ENCODE measurements at regions of chr19 and their contacts with region 1.

Region 1: GRCh38 chr19:29761575-29762232 is 46.6 kb upstream of the C19orf12 start:
- DNase-seq: no peak
- ATAC-seq: no peak
- H3K4me3 Mint-ChIP-seq: no peak overlapping the region
- H3K27ac Mint-ChIP-seq: no peak overlapping the region
- H3K4me1 Mint-ChIP-seq: peaks cover 4% of the 10 kb centered on the region; the same call in 1 of the 2 replicates
- H3K27me3 Mint-ChIP-seq: no peaks in the 10 kb centered on the region
- CTCF ChIP-seq: no peak

Region 2: GRCh38 chr19:29724102-29724641 is 37.5 kb before region 1 on chr19:
- CTCF ChIA-PET with region 1: interaction called, 12 read pairs
- POLR2A ChIA-PET with region 1: no interaction called
- DNase-seq: peak; percentile 62
- ATAC-seq: peak; percentile 80
- H3K4me3 Mint-ChIP-seq: peak overlapping the region; percentile 60
- H3K27ac Mint-ChIP-seq: no peak overlapping the region
- H3K4me1 Mint-ChIP-seq: peaks cover 15% of the 10 kb centered on the region
- H3K27me3 Mint-ChIP-seq: peaks cover 24% of the 10 kb centered on the region
- CTCF ChIP-seq: no peak

Region 3: GRCh38 chr19:29745253-29745652 is 16.5 kb before region 1 on chr19:
- CTCF ChIA-PET with region 1: interaction called, 25 read pairs
- POLR2A ChIA-PET with region 1: no interaction called
- DNase-seq: peak; percentile 69
- ATAC-seq: peak; percentile 98
- H3K4me3 Mint-ChIP-seq: no peak overlapping the region
- H3K27ac Mint-ChIP-seq: no peak overlapping the region
- H3K4me1 Mint-ChIP-seq: no peaks in the 10 kb centered on the region
- H3K27me3 Mint-ChIP-seq: no peaks in the 10 kb centered on the region; the same call in 1 of the 2 replicates
- CTCF ChIP-seq: no peak

Region 4: GRCh38 chr19:29779921-29780320 is 18.2 kb after region 1 on chr19:
- CTCF ChIA-PET with region 1: interaction called, 18 read pairs
- POLR2A ChIA-PET with region 1: no interaction called
- DNase-seq: peak; percentile 51
- ATAC-seq: peak; percentile 88
- H3K4me3 Mint-ChIP-seq: no peak overlapping the region
- H3K27ac Mint-ChIP-seq: peak overlapping the region; percentile 41; the same call in 1 of the 2 replicates
- H3K4me1 Mint-ChIP-seq: peaks cover 11% of the 10 kb centered on the region
- H3K27me3 Mint-ChIP-seq: no peaks in the 10 kb centered on the region; the same call in 1 of the 2 replicates
- CTCF ChIP-seq: no peak

Region 5: GRCh38 chr19:29844891-29845572 is 83.3 kb after region 1 on chr19:
- CTCF ChIA-PET with region 1: interaction called, 10 read pairs
- POLR2A ChIA-PET with region 1: no interaction called
- DNase-seq: peak; percentile 93
- ATAC-seq: peak; percentile 83
- H3K4me3 Mint-ChIP-seq: peak overlapping the region; percentile 94
- H3K27ac Mint-ChIP-seq: peak overlapping the region; percentile 93
- H3K4me1 Mint-ChIP-seq: peaks cover 23% of the 10 kb centered on the region
- H3K27me3 Mint-ChIP-seq: peaks cover 16% of the 10 kb centered on the region
- CTCF ChIP-seq: no peak

Region 6: GRCh38 chr19:29873024-29873800 is 111.5 kb after region 1 on chr19:
- CTCF ChIA-PET with region 1: interaction called, 20 read pairs
- POLR2A ChIA-PET with region 1: no interaction called
- DNase-seq: peak; percentile 85
- ATAC-seq: peak; percentile 81
- H3K4me3 Mint-ChIP-seq: peak overlapping the region; percentile 73
- H3K27ac Mint-ChIP-seq: no peak overlapping the region
- H3K4me1 Mint-ChIP-seq: peaks cover 2% of the 10 kb centered on the region; the same call in 1 of the 2 replicates
- H3K27me3 Mint-ChIP-seq: peaks cover 26% of the 10 kb centered on the region
- CTCF ChIP-seq: peak; percentile 72

Region 7: GRCh38 chr19:29953352-29954247 is 191.9 kb after region 1 on chr19:
- CTCF ChIA-PET with region 1: no interaction called
- POLR2A ChIA-PET with region 1: no interaction called
- DNase-seq: no peak
- ATAC-seq: no peak
- H3K4me3 Mint-ChIP-seq: no peak overlapping the region
- H3K27ac Mint-ChIP-seq: 0 out of 2 replicates have a peak overlapping the region, but pooled peaks have one; percentile 27
- H3K4me1 Mint-ChIP-seq: peaks cover 23% of the 10 kb centered on the region
- H3K27me3 Mint-ChIP-seq: no peaks in the 10 kb centered on the region
- CTCF ChIP-seq: no peak